MCF 10A (cell line): ENCODE measurements at regions of chr11 and their contacts with region 1.

Region 1: DNA sequence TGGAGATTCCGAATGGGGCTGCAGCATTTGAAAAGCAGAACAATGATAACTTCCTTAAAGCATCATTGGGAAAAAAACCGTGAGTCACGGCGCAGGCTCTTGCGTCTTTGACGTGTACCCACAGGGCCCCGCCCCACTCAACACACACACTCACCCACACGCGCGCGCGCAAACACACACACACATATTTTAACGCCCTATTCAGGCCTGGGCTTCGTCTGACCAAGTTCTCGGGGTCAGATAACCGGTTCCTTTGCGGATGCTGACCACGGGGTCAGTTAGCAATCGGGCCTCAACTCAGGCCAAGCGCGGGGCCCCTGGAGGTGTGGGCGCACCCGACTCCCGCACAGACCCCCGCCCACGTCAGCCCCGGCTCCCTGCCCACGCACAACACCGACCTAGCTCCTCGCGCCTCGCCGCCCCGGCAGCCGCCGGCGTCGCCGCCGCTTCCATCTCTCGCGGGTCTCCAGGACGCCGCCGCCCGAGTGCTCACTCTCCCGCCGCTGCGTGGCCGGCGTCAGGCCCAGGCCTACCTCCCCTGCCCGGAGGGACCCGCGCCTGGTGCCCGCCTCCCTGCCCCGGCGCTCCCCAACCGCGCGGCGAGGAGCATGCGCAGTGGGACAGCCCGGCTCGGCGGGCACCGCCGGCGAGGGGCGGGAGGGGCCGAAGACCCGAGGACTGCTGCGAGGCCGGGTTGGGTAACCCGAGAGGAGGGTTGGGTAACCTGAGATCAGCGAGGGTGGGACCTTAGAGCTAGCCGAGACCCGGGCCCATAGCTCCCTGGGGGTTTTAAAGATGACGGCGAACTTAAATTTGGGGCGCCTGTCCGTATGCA is at the start of gene SLC36A4:
- DNase-seq: peak; percentile 95
- H3K4me3 Mint-ChIP-seq: peak within 1 kb of the TSS; percentile 94
- H3K27ac Mint-ChIP-seq: peak within 1 kb of the TSS; percentile 97
- H3K4me1 Mint-ChIP-seq: peaks cover 22% of the 10 kb centered on the region
- H3K27me3 Mint-ChIP-seq: peaks cover 21% of the 10 kb centered on the region
- CTCF ChIP-seq: no peak
- total RNA-seq, gene SLC36A4: 23.4 and 30.1 TPM in 2 replicates

Region 2: GRCh38 chr11:93225662-93226061 is 28.1 kb after region 1 on chr11:
- CTCF ChIA-PET with region 1: interaction called, 10 read pairs
- POLR2A ChIA-PET with region 1: interaction called, 3 read pairs
- intact Hi-C with region 1: no loop called
- DNase-seq: peak; percentile 43
- H3K4me3 Mint-ChIP-seq: no peak overlapping the region
- H3K27ac Mint-ChIP-seq: no peak overlapping the region
- H3K4me1 Mint-ChIP-seq: no peaks in the 10 kb centered on the region
- H3K27me3 Mint-ChIP-seq: no peaks in the 10 kb centered on the region
- CTCF ChIP-seq: peak; percentile 48